ENCODE measurements at regions of chr1 and their contacts with region 1.

Region 1: GRCh38 chr1:51192213-51192843 is 43.7 kb upstream of the RNF11 start:
- H3K4me3 ChIP-seq: no peak overlapping the region
- H3K27ac ChIP-seq: no peak overlapping the region
- H3K4me1 ChIP-seq: no peaks in the 10 kb centered on the region
- CTCF ChIP-seq: peak; percentile 39; the same call in 1 of the 2 replicates

Region 2: GRCh38 chr1:50774759-50775351 is 417.5 kb before region 1 on chr1:
- CTCF ChIA-PET with region 1: interaction called, 58 read pairs
- POLR2A ChIA-PET with region 1: no interaction called
- H3K4me3 ChIP-seq: no peak overlapping the region
- H3K27ac ChIP-seq: no peak overlapping the region
- H3K4me1 ChIP-seq: no peaks in the 10 kb centered on the region
- CTCF ChIP-seq: 0 out of 2 replicates have a peak, but pooled peaks have one; percentile 22

Region 3: GRCh38 chr1:50929376-50929958 is 262.9 kb before region 1 on chr1:
- CTCF ChIA-PET with region 1: interaction called, 48 read pairs
- POLR2A ChIA-PET with region 1: no interaction called
- H3K4me3 ChIP-seq: no peak overlapping the region
- H3K27ac ChIP-seq: no peak overlapping the region
- H3K4me1 ChIP-seq: no peaks in the 10 kb centered on the region
- CTCF ChIP-seq: no peak

Region 4: DNA sequence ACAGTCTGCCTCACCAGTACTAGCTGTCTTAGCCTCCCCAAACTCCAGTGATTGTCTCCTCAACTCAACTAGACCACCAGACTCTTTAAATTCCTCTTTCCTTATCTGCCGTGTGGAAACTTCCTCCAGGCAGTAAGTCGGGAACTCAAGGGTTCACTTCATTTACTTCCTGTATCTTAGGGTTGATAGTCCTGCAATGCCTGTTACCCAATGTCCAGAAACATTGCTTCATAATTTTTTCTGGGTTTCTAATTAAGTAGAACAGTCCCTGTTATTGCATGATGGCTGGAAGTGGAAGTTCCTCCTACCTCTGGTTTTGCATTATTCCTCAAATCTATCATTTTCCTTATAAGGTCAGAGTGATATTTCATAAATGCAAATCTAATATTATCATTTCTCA is 17.1 kb before region 1 on chr1:
- CTCF ChIA-PET with region 1: interaction called, 17 read pairs
- POLR2A ChIA-PET with region 1: no interaction called
- H3K4me3 ChIP-seq: no peak overlapping the region
- H3K27ac ChIP-seq: no peak overlapping the region
- H3K4me1 ChIP-seq: no peaks in the 10 kb centered on the region
- CTCF ChIP-seq: no peak

Region 5: DNA sequence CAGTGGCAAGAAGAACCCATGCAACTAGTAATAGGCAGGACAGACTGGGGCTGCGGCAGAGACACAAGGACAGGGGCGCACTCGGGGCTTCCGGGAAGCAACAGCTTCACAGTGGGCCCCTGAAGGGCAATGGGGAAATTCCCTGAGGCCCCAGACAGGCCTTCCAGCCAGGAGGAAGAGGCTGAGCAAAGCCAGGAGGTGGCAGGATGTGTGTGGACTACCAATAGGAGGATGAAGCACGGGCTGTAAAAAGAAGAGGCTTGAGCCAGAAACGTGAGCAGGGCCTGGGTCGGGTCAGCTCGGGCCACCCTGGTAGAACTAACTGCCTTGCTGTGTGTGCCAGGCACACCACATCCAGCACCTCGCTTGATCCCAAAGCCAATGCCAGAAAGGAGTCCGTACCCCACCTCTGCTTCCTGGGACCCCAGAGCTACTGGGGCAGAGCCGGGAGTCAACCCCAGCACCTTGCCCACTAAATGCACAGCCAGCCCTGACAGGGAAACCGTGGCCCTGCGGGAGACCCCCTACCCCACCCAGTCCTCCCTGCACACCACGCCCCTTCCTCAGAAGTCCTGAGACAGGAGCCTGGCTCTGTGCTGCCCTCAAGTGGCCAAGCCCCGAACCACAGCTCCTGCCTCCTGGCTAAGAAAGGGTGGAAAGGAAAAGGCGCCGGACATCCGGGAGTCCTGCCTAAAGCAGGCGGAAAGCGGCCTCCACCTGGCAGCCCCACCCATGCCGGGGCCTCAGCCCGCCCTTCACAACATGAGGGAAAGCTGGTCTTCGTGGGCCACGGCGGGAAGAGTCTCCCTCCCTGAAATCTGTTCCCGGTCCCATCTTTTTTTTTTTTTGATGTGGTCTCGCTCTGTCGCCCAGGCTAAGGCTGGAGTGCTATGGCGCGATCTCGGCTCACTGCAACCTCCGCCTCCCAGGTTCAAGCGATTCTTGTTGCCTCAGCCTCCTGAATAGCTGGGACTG is 104.3 kb after region 1 on chr1:
- CTCF ChIA-PET with region 1: interaction called, 39 read pairs
- POLR2A ChIA-PET with region 1: no interaction called
- H3K4me3 ChIP-seq: no peak overlapping the region
- H3K27ac ChIP-seq: no peak overlapping the region
- H3K4me1 ChIP-seq: no peaks in the 10 kb centered on the region
- CTCF ChIP-seq: peak; percentile 90